H1 (cell line): ENCODE measurements at regions of chr17 and their contacts with region 1.

Region 1: GRCh38 chr17:4127555-4127954 is 15.3 kb downstream of the ZZEF1 start:
- DNase-seq: no peak
- H3K4me3 ChIP-seq: no peak overlapping the region
- H3K27ac ChIP-seq: no peak overlapping the region
- H3K4me1 ChIP-seq: peaks cover 0 to 8% (median 5%) of the 10 kb centered on the region in 4 experiments; a peak in 4 of 7 replicates
- H3K27me3 ChIP-seq: no peaks in the 10 kb centered on the region
- CTCF ChIP-seq: no peak
- EP300 ChIP-seq: no peak
- POLR2A ChIP-seq: no peak
- RAD21 ChIP-seq: no peak

Region 2: GRCh38 chr17:3965118-3965803 is 162.3 kb before region 1 on chr17:
- CTCF ChIA-PET with region 1: no interaction called
- POLR2A ChIA-PET with region 1: no interaction called
- DNase-seq: peak in 1 of 2 experiments; percentile 80
- H3K4me3 ChIP-seq: peak overlapping the region; percentile 22 to 80 (median 56)
- H3K27ac ChIP-seq: no peak overlapping the region
- H3K4me1 ChIP-seq: peaks cover 3 to 18% (median 10%) of the 10 kb centered on the region in 4 experiments
- H3K27me3 ChIP-seq: peaks cover 2 to 27% (median 15%) of the 10 kb centered on the region in 4 experiments; a peak in 6 of 7 replicates
- CTCF ChIP-seq: no peak
- EP300 ChIP-seq: no peak
- POLR2A ChIP-seq: no peak
- RAD21 ChIP-seq: peak in 1 of 2 experiments; percentile 20; a peak in 1 of 4 replicates

Region 3: GRCh38 chr17:4049546-4049945 is 78.0 kb before region 1 on chr17:
- CTCF ChIA-PET with region 1: no interaction called
- POLR2A ChIA-PET with region 1: no interaction called
- DNase-seq: no peak
- H3K4me3 ChIP-seq: no peak overlapping the region
- H3K27ac ChIP-seq: no peak overlapping the region
- H3K4me1 ChIP-seq: no peaks in the 10 kb centered on the region
- H3K27me3 ChIP-seq: no peaks in the 10 kb centered on the region
- CTCF ChIP-seq: no peak
- EP300 ChIP-seq: no peak
- POLR2A ChIP-seq: no peak
- RAD21 ChIP-seq: no peak

Region 4: DNA sequence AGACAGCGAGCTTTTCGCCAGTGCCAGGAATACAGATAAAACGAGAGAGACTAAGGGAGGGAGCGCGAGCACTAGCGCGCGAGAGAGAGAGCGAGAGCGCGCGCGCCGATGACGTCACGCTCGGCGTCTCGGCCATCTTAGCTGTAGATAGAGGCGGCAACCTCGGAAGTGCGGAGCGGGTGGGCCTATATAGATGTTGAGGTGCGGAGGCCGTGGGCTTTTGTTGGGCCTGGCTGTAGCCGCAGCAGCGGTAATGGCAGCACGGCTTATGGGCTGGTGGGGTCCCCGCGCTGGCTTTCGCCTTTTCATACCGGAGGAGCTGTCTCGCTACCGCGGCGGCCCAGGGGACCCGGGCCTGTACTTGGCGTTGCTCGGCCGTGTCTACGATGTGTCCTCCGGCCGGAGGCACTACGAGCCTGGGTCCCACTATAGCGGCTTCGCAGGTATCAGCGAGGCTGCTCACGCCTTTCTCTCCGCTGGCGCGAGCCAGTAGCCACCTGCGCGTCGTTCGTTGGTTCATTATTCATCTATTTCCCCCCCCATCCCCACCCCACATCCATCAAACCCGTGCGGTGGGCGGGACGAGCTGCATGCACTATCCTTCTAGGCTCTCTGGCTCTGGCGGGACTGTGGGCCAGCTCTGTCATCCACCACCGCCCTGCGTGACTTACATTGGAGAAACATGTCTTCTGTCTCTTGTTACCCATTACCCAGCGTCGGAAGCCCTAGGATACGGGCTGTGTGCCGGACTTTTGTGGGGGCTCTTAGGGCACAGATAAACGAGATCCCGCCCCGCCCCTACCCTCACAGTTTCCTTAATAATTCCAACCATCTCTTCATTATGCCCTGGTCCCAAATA is 16.2 kb after region 1 on chr17:
- CTCF ChIA-PET with region 1: interaction called, 9 read pairs
- POLR2A ChIA-PET with region 1: interaction called, 17 read pairs
- DNase-seq: peak; percentile 75 to 88
- H3K4me3 ChIP-seq: peak overlapping the region; percentile 50 to 94 (median 90)
- H3K27ac ChIP-seq: peak overlapping the region; percentile 92
- H3K4me1 ChIP-seq: peaks cover 0 to 4% (median 1%) of the 10 kb centered on the region in 4 experiments; a peak in 2 of 7 replicates
- H3K27me3 ChIP-seq: no peaks in the 10 kb centered on the region
- CTCF ChIP-seq: no peak
- EP300 ChIP-seq: no peak
- POLR2A ChIP-seq: peak; percentile 83 to 97
- RAD21 ChIP-seq: no peak